ENCODE measurements at regions of chr1 and their contacts with region 1.

Region 1: DNA sequence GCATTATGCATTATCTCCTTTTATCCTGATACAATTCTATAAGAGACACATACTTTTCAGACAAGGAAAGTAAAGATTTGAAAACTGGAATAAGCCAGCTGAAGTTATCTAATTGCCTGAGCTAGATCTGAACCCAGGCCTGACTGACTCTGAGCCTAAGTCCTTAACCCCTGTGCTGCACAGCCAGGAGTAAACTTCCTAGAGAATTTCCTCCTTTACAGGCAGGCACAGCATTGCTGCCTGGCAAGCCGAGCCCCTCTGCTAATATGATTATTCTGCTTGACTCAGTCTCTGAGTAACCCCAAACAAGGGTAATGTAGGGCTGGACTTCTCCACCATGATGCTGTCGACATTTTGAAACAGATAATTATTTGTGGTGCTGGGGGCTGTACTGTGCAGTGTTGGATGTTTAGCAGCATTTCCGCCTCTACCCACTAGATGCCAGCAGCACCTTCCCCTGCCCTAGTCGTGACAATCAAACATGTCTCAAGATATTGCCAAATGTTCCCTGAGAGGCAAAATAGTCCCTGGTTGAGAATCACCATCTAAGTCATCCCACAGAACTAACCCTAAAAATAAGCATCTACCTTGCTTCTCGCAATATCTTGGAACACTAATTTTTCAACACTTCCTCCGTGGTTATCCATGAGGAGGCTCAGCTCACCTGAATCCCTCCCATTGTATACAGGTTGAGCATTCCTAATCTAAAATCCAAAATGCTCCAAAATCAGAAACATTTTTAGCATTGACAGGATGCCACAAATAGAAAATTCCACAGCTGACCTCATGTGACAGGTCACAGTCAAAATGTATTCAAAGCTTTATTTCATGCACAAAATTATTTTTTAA is 18.5 kb downstream of the CAMK1G start:
- DNase-seq: peak; percentile 61
- H3K4me3 Mint-ChIP-seq: no peak overlapping the region
- H3K27ac Mint-ChIP-seq: no peak overlapping the region
- H3K4me1 Mint-ChIP-seq: no peaks in the 10 kb centered on the region
- H3K27me3 Mint-ChIP-seq: peaks cover 40% of the 10 kb centered on the region
- CTCF ChIP-seq: peak; percentile 85

Region 2: DNA sequence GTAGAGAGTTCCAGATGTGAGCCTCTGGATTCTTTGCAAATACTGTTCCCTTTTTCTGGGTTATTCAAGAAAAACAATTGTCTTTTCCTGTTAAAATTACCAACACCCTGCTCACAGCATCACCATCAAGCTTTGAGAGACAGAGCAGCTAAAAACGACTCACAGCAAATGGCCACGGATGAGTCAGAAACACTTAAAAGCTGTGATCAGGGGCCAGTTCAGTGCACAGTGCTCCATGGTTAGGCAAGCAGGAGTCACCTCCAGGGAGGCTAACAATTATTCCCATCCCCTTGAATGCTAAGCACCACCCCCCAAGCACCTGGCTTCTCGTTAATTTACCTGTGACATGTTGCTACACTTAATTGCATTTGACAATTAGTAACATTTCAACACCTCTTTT is 146.9 kb before region 1 on chr1:
- CTCF ChIA-PET with region 1: no interaction called
- intact Hi-C with region 1: no loop called
- DNase-seq: no peak
- H3K4me3 Mint-ChIP-seq: no peak overlapping the region
- H3K27ac Mint-ChIP-seq: no peak overlapping the region
- H3K4me1 Mint-ChIP-seq: no peaks in the 10 kb centered on the region
- H3K27me3 Mint-ChIP-seq: peaks cover 76% of the 10 kb centered on the region
- CTCF ChIP-seq: no peak

Region 3: GRCh38 chr1:209692745-209693504 is 90.9 kb after region 1 on chr1:
- CTCF ChIA-PET with region 1: no interaction called
- intact Hi-C with region 1: loop called (anchors 1 kb)
- DNase-seq: peak; percentile 90
- H3K4me3 Mint-ChIP-seq: no peak overlapping the region
- H3K27ac Mint-ChIP-seq: peak overlapping the region; percentile 76
- H3K4me1 Mint-ChIP-seq: peaks cover 35% of the 10 kb centered on the region
- H3K27me3 Mint-ChIP-seq: peaks cover 20% of the 10 kb centered on the region
- CTCF ChIP-seq: peak; percentile 81

Measured in Calu3 (cell line).